ENCODE measurements at regions of chr2 and their contacts with region 1.

Region 1: DNA sequence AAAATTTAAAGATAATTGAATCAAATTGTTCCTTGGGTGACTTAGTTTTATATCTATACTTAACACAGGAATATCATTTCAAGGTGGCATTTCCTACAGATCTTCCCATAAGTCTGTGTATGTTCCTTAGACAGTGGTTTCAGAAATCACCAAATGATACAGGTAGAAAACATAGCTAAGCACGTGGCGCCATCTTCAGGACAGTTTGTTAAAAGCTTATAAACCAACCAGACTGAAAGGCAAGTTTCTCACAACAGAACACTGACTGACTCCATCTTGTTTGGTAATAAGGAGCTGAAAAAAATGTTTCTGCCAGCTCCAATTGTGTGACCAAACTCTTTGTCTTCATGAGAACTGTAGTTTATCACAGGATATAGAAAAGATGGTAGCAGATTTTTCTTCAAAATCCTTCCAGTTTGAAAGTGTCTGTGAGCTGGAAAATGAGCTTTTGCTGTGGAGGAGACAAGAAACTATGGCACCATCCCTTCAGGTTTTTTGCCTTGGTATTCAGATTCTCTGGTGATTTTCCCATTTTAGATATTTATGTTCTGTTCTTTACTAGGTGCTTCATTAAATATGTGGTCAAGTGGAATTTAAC is 34.8 kb upstream of the NEUROD1 start:
- DNase-seq: peak; percentile 51 to 68 (median 58)
- H3K4me3 ChIP-seq: no peak overlapping the region
- H3K4me3 Mint-ChIP-seq: no peak overlapping the region
- H3K27ac ChIP-seq: no peak overlapping the region
- H3K27ac Mint-ChIP-seq: no peak overlapping the region
- H3K4me1 ChIP-seq: no peaks in the 10 kb centered on the region
- H3K4me1 Mint-ChIP-seq: no peaks in the 10 kb centered on the region
- H3K27me3 ChIP-seq: no peaks in the 10 kb centered on the region
- H3K27me3 Mint-ChIP-seq: peaks cover 0 to 3% of the 10 kb centered on the region in 2 donors

Region 2: GRCh38 chr2:180125245-180125962 is 1589.7 kb before region 1 on chr2:
- CTCF ChIA-PET with region 1: interaction called, 28 read pairs
- POLR2A ChIA-PET with region 1: no interaction called
- intact Hi-C with region 1: loop called (anchors 1 kb)
- DNase-seq: peak; percentile 28 to 44 (median 38)
- H3K4me3 ChIP-seq: no peak overlapping the region
- H3K4me3 Mint-ChIP-seq: peak overlapping the region in 1 of 8 donors; percentile 29
- H3K27ac ChIP-seq: no peak overlapping the region
- H3K27ac Mint-ChIP-seq: no peak overlapping the region
- H3K4me1 ChIP-seq: no peaks in the 10 kb centered on the region
- H3K4me1 Mint-ChIP-seq: peaks cover 0 to 7% (median 4%) of the 10 kb centered on the region in 4 donors
- H3K27me3 ChIP-seq: no peaks in the 10 kb centered on the region
- H3K27me3 Mint-ChIP-seq: peaks cover 0 to 7% of the 10 kb centered on the region in 2 donors

Region 3: GRCh38 chr2:181077128-181077709 is 637.9 kb before region 1 on chr2:
- CTCF ChIA-PET with region 1: interaction called, 20 read pairs
- POLR2A ChIA-PET with region 1: interaction called, 4 read pairs
- intact Hi-C with region 1: loop called (anchors 1 kb)
- DNase-seq: peak; percentile 36 to 69 (median 65)
- H3K4me3 ChIP-seq: no peak overlapping the region
- H3K4me3 Mint-ChIP-seq: no peak overlapping the region
- H3K27ac ChIP-seq: no peak overlapping the region
- H3K27ac Mint-ChIP-seq: no peak overlapping the region
- H3K4me1 ChIP-seq: no peaks in the 10 kb centered on the region
- H3K4me1 Mint-ChIP-seq: peaks cover 0 to 3% (median 2%) of the 10 kb centered on the region in 4 donors
- H3K27me3 ChIP-seq: no peaks in the 10 kb centered on the region
- H3K27me3 Mint-ChIP-seq: peaks cover 0 to 2% of the 10 kb centered on the region in 2 donors

Region 4: GRCh38 chr2:181083140-181083539 is 632.0 kb before region 1 on chr2:
- CTCF ChIA-PET with region 1: interaction called, 13 read pairs
- POLR2A ChIA-PET with region 1: interaction called, 4 read pairs
- intact Hi-C with region 1: no loop called
- DNase-seq: no peak
- H3K4me3 ChIP-seq: no peak overlapping the region
- H3K4me3 Mint-ChIP-seq: no peak overlapping the region
- H3K27ac ChIP-seq: no peak overlapping the region
- H3K27ac Mint-ChIP-seq: no peak overlapping the region
- H3K4me1 ChIP-seq: no peaks in the 10 kb centered on the region
- H3K4me1 Mint-ChIP-seq: no peaks in the 10 kb centered on the region
- H3K27me3 ChIP-seq: no peaks in the 10 kb centered on the region
- H3K27me3 Mint-ChIP-seq: peaks cover 0 to 11% of the 10 kb centered on the region in 2 donors

Region 5: DNA sequence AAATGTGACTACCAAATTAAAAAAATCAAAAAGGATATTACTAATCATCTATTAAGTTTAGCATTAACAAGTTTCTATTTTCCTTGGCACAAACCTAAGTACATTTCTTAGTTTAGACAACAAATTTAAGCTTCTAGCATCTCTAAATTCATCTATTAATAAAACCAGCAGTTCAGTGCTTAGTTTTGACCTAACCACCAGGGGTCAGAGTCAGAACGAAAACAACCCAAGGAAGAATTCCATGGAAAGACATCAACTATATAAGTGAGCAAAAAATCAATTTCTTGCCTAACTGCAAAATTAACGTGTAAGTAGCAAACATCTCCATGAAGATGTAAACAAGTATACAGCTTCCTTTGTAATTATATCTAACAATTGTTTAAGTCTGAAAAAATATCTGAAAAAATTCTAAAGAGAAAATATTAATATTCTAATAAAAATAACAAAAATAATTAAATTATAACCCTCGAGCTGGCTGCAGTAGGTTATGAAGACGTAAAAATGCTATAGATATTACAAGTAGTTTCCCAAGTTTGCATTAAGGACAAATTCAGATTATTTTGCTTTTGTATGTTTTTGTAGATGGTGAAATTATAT is 141.9 kb before region 1 on chr2:
- CTCF ChIA-PET with region 1: interaction called, 14 read pairs
- POLR2A ChIA-PET with region 1: no interaction called
- intact Hi-C with region 1: loop called (anchors 5 kb)
- DNase-seq: no peak
- H3K4me3 ChIP-seq: no peak overlapping the region
- H3K4me3 Mint-ChIP-seq: no peak overlapping the region
- H3K27ac ChIP-seq: no peak overlapping the region
- H3K27ac Mint-ChIP-seq: no peak overlapping the region
- H3K4me1 ChIP-seq: no peaks in the 10 kb centered on the region
- H3K4me1 Mint-ChIP-seq: peaks cover 0 to 2% (median under 1%) of the 10 kb centered on the region in 4 donors
- H3K27me3 ChIP-seq: peaks cover 4% of the 10 kb centered on the region
- H3K27me3 Mint-ChIP-seq: peaks cover 0 to 4% of the 10 kb centered on the region in 2 donors

Region 6: DNA sequence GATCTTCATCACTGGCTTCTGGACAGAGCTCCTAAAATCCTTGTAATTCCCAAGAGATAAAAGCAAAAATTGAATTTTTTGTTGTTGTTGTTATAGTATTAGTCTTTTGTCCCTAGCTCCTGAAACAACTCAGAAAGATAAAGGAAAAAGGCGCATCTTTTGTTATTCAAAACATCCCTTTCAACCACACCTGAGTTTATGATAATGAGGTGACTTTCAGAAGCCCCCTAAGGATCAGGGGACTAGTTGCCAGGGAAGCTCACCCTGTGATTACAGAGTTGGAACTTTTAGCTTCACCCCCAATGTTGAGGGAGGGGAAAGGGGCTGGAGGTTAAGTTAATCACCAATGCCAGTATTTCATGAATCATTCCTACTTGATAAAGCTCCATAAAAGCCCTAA is 47.9 kb before region 1 on chr2:
- CTCF ChIA-PET with region 1: no interaction called
- POLR2A ChIA-PET with region 1: no interaction called
- intact Hi-C with region 1: no loop called
- DNase-seq: no peak
- H3K4me3 ChIP-seq: no peak overlapping the region
- H3K4me3 Mint-ChIP-seq: no peak overlapping the region
- H3K27ac ChIP-seq: no peak overlapping the region
- H3K27ac Mint-ChIP-seq: no peak overlapping the region
- H3K4me1 ChIP-seq: no peaks in the 10 kb centered on the region
- H3K4me1 Mint-ChIP-seq: no peaks in the 10 kb centered on the region
- H3K27me3 ChIP-seq: no peaks in the 10 kb centered on the region
- H3K27me3 Mint-ChIP-seq: peaks cover 11 to 15% of the 10 kb centered on the region in 2 donors

Region 7: GRCh38 chr2:181698223-181698622 is 16.9 kb before region 1 on chr2:
- CTCF ChIA-PET with region 1: interaction called, 12 read pairs
- POLR2A ChIA-PET with region 1: no interaction called
- intact Hi-C with region 1: no loop called
- DNase-seq: no peak
- H3K4me3 ChIP-seq: no peak overlapping the region
- H3K4me3 Mint-ChIP-seq: no peak overlapping the region
- H3K27ac ChIP-seq: no peak overlapping the region
- H3K27ac Mint-ChIP-seq: peak overlapping the region in 1 of 7 donors; percentile 3
- H3K4me1 ChIP-seq: no peaks in the 10 kb centered on the region
- H3K4me1 Mint-ChIP-seq: no peaks in the 10 kb centered on the region
- H3K27me3 ChIP-seq: peaks cover 4% of the 10 kb centered on the region
- H3K27me3 Mint-ChIP-seq: peaks cover 13 to 17% of the 10 kb centered on the region in 2 donors

Region 8: DNA sequence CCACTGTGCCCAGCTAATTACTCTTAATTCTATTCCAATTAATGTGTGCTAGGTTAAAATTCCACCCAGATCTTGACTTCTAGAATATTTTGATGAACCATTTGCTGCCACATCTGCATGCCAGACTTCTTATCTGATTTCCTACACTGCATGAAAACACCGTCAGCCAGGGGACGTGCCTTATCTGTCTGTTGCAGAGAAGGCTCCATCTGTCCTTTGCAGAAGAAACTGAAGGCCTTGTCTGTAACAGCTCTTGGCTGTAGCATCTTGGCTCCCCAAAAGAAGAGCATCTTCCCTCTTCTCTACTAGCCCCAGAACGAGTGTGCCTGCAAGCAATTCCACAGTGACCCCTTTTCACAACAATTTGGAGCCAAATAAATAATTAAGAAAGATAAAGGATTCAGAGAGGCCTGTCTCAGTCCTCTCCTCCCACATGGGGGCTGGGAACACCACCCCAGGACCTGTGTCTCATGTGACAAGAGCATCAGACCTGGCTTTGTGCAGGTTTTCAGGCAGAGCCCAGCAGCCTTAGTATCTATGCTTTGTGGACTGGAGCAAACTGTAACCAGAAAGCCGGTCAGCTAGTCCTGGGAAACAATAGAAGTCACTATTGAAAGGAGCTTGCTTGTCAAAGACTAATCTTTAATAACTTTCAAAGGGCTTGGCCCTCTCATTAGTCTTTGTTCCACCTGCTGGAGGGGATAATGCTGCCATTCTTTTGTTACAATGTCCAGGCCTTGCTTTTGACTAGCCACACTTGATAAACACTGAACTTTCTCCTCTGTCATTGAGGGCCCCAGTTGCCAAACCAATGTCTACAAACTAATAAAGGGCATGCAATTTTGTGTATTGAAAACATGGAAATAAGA is 49.2 kb after region 1 on chr2:
- CTCF ChIA-PET with region 1: no interaction called
- POLR2A ChIA-PET with region 1: no interaction called
- intact Hi-C with region 1: no loop called
- DNase-seq: no peak
- H3K4me3 ChIP-seq: no peak overlapping the region
- H3K4me3 Mint-ChIP-seq: no peak overlapping the region
- H3K27ac ChIP-seq: no peak overlapping the region
- H3K27ac Mint-ChIP-seq: no peak overlapping the region
- H3K4me1 ChIP-seq: no peaks in the 10 kb centered on the region
- H3K4me1 Mint-ChIP-seq: no peaks in the 10 kb centered on the region
- H3K27me3 ChIP-seq: no peaks in the 10 kb centered on the region
- H3K27me3 Mint-ChIP-seq: peaks cover 5 to 13% of the 10 kb centered on the region in 2 donors